Heart left ventricle (tissue), 16 donors: ENCODE measurements at regions of chr6 and their contacts with region 1.

Region 1: DNA sequence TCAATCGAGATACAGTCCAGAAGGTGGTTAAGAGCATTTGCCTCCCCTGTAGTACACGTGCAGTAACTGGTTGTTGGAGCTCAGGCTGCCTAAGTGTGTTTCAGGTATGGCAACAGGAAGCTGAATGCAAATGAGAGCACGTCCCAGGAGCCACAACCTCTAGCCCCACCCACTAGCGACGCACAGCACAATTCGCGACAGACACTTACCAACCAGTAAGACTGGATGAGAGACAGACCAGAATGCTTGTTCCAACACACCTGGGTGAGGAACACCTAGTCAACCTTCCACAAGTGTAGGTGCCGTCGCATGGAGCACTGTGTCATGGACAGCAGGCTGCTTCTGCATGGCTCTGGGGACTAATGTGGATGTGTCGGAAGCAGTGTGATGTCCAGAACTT is 7.2 kb upstream of the SERPINB1 start:
- DNase-seq: no peak
- ATAC-seq: no peak
- H3K4me3 ChIP-seq: no peak overlapping the region
- H3K27ac ChIP-seq: no peak overlapping the region
- H3K4me1 ChIP-seq: peaks cover 0 to 41% (median 22%) of the 10 kb centered on the region in 12 donors
- H3K27me3 ChIP-seq: no peaks in the 10 kb centered on the region
- CTCF ChIP-seq: no peak
- POLR2A ChIP-seq: no peak

Region 2: DNA sequence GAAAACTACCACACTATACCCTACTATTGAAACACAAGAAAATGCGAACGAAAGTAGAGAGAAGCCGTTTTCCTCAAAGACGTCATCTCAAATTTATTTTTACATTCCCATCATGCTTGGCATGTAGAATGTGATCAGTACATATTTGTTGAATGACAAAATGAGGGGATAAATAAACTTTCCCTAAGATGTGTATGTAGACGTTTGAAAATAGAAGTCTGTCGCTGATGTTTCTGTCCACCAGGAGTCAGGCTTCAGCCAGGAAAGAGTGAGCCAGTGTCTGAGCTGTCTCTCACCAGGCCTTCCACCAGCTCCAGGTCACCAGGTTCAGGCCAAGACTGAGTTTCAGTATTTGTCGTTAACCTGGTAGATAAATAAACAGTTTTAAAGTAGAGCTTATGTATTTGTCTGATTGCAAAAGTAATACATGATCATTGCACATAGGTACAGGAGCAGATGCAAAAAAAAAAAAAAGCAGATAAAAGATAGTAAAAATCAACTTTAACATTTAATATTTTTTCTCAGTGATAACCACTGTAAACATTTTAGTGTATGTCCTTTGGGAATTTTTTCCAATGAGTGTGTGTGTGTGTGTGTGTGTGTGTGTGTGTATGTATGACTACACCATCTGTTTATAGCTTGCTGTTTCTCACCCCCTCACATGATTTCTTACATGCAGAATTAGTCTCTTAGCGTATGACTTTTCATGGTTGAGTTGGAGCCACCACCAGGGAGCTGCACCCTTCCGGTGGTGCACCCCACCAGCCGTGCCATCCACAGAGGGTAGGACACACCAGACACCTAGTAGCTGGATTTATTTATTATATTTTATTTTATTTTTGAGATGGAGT is 57.5 kb before region 1 on chr6:
- intact Hi-C with region 1: loop called in 8 of 10 experiments (anchors 1 to 5 kb)
- DNase-seq: peak in 4 of 5 donors; percentile 68 to 78 (median 72)
- ATAC-seq: peak; percentile 82 to 91 (median 86)
- H3K4me3 ChIP-seq: peak overlapping the region in 2 of 12 donors; percentile 5 to 8
- H3K27ac ChIP-seq: peak overlapping the region; percentile 35 to 88 (median 68)
- H3K4me1 ChIP-seq: peaks cover 0 to 59% (median 25%) of the 10 kb centered on the region in 12 donors
- H3K27me3 ChIP-seq: no peaks in the 10 kb centered on the region
- CTCF ChIP-seq: peak; percentile 62 to 89 (median 72)
- POLR2A ChIP-seq: no peak

Region 3: DNA sequence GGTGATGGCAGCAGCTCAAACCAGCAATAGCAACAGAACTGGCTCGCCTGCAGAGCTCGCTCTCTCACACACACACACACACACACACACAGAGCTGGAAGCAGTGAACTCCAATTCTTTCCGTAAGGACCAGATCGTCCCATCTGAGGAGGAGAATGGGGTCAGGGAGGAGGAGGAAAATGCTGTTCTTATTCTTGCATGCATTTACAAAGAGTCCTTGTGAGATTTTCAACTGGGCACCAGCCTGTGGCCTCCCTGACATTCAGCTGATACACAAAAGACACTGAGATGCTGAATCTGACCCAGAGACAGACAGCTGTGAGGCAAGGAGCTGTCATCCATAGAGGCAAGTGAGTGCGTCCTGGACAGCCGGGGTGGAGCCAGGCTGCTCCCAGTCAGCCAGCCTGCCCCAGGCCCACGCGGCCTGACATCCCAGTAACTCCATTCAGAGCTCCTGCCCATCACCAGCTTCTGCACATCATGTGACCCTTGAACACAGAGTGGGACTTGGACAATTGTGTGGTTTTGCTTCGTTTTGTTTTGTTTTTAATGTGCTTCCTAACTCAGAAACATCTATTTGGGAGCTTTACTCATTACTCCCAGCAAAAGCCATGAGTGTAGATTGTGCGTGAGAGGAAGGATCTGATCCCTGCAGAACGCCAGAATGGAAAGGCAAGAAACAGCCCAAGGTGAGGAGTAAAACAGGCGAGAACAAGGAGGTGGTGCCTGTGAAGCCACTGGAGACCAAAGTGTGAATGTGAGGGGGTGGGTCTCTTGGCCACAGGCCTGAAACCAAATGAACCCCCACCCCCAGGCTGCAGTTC is 52.2 kb after region 1 on chr6:
- intact Hi-C with region 1: loop called in 3 of 10 experiments (anchors 2 to 10 kb)
- DNase-seq: peak in 2 of 5 donors; percentile 43 to 51
- ATAC-seq: no peak
- H3K4me3 ChIP-seq: peak overlapping the region in 8 of 12 donors; percentile 18 to 94 (median 78)
- H3K27ac ChIP-seq: peak overlapping the region in 3 of 12 donors; percentile 11 to 54 (median 22)
- H3K4me1 ChIP-seq: peaks cover 0 to 61% (median 19%) of the 10 kb centered on the region in 12 donors
- H3K27me3 ChIP-seq: no peaks in the 10 kb centered on the region
- CTCF ChIP-seq: no peak
- POLR2A ChIP-seq: no peak

Region 4: GRCh38 chr6:2911171-2911570 is 62.3 kb after region 1 on chr6:
- intact Hi-C with region 1: loop called in 5 of 10 experiments (anchors 5 to 10 kb)
- DNase-seq: no peak
- ATAC-seq: no peak
- H3K4me3 ChIP-seq: no peak overlapping the region
- H3K27ac ChIP-seq: no peak overlapping the region
- H3K4me1 ChIP-seq: peaks cover 0 to 4% (median 0%) of the 10 kb centered on the region in 12 donors
- H3K27me3 ChIP-seq: no peaks in the 10 kb centered on the region
- CTCF ChIP-seq: no peak
- POLR2A ChIP-seq: no peak

Region 5: DNA sequence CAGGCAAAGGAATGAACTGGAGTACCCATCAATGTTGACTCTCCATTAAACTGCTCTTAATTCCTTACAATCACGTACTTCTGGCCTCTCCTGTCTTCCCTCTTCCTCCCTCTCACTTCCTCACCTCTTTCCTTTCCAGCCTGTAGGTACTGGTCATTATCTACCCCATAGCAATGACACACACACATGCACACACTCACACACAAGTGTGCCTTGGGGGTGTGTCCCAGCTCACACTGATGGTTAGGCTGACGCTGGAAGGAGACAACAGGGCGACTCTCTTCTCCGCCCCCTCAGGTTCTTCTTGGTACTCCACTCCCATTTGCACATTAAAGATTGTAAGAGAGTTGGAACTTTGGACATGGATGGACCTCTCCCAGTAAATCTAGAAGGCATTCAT is 68.2 kb after region 1 on chr6:
- intact Hi-C with region 1: loop called in 4 of 10 experiments (anchors 5 kb)
- DNase-seq: no peak
- ATAC-seq: no peak
- H3K4me3 ChIP-seq: no peak overlapping the region
- H3K27ac ChIP-seq: no peak overlapping the region
- H3K4me1 ChIP-seq: peaks cover 0 to 12% (median under 1%) of the 10 kb centered on the region in 12 donors
- H3K27me3 ChIP-seq: no peaks in the 10 kb centered on the region
- CTCF ChIP-seq: no peak
- POLR2A ChIP-seq: no peak

Region 6: DNA sequence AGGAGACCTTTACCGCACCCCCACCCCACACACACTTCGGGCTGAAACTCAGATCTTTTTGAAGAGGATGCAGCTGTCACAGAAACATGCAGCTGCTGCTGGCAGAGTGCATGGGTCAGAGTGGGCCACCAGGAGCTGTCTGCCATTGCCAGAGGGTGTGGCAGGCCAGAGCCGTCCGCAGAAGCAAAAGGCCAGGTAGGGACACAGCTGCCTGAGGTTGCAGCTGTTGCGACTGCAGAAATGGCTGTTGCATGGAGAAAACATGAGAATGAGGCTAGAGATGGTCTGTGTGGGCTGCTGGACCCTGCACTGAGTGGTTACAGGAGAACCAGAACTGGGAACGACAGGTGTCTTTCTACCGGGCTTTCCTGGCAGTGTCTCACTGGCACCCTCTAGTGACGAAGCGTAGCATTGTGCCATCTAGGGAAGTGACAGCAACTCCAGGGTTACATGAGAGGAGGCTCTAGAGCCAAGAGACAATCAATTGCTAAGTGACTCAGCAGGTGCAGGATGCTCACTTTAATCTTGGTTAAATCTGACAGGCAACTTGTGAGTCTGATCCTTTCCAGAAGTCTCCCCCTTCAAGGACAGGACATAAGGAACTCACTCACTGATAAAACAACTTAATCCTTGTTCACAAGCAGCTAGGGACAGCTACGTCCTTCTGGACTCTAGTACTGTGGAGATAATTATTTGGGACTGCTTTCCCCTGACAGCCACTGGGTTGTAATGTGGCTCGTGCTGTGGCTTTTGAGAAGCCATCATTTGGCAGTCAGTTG is 83.3 kb after region 1 on chr6:
- intact Hi-C with region 1: loop called (anchors 1 to 5 kb)
- DNase-seq: peak; percentile 78 to 84 (median 81)
- ATAC-seq: peak; percentile 89 to 97 (median 95)
- H3K4me3 ChIP-seq: peak overlapping the region in 5 of 12 donors; percentile 15 to 33 (median 18)
- H3K27ac ChIP-seq: peak overlapping the region in 7 of 12 donors; percentile 4 to 57 (median 40)
- H3K4me1 ChIP-seq: peaks cover 0 to 10% (median 5%) of the 10 kb centered on the region in 12 donors
- H3K27me3 ChIP-seq: no peaks in the 10 kb centered on the region
- CTCF ChIP-seq: peak; percentile 95 to 99 (median 97)
- POLR2A ChIP-seq: no peak

Region 7: DNA sequence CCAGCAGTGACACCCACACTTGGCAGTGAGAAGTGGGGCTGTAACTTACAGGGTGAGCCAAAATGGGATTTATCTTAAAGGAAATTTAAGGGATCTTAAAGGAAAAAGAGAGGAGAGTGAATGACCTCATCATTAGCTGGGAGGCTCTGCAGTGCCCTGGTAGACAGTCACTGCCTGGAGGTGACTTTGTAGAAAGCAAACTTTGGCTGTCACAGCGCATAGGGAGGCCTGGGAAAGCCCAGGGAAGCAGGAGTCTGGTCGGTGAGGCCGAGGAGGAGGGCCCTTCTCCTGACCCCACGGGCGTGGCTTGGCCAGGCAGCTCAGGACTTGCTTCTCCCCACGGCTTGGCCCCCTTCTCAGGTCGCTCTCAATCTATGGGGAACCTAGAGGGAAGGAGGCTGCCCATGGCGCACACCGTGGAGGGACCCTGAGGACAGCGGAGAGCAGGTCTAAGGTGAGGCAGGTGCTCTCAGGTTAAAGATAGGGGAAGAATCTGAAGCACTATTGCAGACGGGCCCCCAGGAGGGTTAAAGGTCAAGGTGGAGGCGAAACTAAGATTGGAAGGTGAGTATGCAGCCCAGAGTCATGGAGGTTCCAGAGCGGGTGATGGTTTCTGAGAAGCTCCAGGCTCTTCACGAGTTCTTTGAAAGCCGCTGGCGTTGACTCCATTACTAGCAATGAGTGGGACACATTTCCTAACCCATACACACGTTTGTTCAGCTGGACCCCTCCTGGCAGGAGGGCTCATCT is 203.8 kb after region 1 on chr6:
- intact Hi-C with region 1: loop called in 8 of 10 experiments (anchors 5 to 10 kb)
- DNase-seq: no peak
- ATAC-seq: no peak
- H3K4me3 ChIP-seq: peak overlapping the region in 1 of 12 donors; percentile 59
- H3K27ac ChIP-seq: peak overlapping the region in 1 of 12 donors; percentile 69
- H3K4me1 ChIP-seq: peaks cover 0 to 31% (median 16%) of the 10 kb centered on the region in 12 donors
- H3K27me3 ChIP-seq: no peaks in the 10 kb centered on the region
- CTCF ChIP-seq: no peak
- POLR2A ChIP-seq: no peak